Activated CD4-positive, alpha-beta T cell treated with anti-CD3 and anti-CD28 coated beads for 36 hours (primary cell): ENCODE measurements at regions of chr21 and their contacts with region 1.

Region 1: DNA sequence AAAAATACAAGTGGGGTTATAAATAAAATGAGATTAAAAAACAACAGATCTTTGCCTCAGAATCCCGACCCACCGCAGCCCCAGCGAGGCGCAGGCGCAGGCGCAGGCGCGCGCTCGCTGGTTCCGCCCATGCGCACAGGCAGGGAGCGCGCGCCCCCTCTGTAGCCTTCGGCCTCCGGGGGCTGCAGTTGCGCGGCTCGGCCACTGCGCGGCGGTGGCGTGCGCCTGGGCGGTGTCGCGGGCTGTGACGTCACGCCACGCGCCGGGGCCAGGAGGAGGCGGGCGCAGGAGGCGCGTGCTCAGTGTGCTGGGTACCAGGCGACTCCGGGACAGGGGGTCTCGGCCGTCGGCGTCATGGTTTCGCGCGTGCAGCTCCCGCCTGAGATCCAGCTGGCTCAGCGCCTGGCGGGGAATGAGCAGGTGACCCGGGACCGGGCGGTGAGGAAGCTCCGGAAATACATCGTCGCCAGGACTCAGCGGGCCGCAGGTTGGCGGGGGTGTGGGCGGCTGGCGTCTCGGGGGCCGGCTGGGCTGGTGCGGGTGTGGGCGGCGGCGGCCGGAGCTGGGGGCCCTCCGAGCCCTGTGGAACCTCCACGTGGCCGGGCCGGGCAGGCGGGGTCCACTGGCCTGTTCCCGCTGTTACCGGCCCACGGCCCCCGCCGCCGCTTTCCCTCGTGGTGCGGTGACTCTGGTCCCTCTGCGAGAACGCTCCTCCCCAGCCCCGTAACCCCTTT is at the start of gene RRP1:
- DNase-seq: peak; percentile 96
- ATAC-seq: peak; percentile 90
- H3K4me3 Mint-ChIP-seq: peak within 1 kb of the TSS; percentile 95
- H3K27ac Mint-ChIP-seq: peak within 1 kb of the TSS; percentile 92
- H3K4me1 Mint-ChIP-seq: peaks cover 21% of the 10 kb centered on the region
- H3K27me3 Mint-ChIP-seq: no peaks in the 10 kb centered on the region
- total RNA-seq, gene RRP1: 51.7 to 53.4 TPM

Region 2: GRCh38 chr21:42878993-42879787 is 910.3 kb before region 1 on chr21 and contains the start of gene WDR4:
- CTCF ChIA-PET with region 1: no interaction called
- POLR2A ChIA-PET with region 1: no interaction called
- intact Hi-C with region 1: loop called in 1 of 2 experiments (anchors 1 kb)
- DNase-seq: peak; percentile 99
- ATAC-seq: peak; percentile 93
- H3K4me3 Mint-ChIP-seq: peak within 1 kb of the TSS; percentile 92
- H3K27ac Mint-ChIP-seq: peak within 1 kb of the TSS; percentile 99
- H3K4me1 Mint-ChIP-seq: peaks cover 17% of the 10 kb centered on the region
- H3K27me3 Mint-ChIP-seq: no peaks in the 10 kb centered on the region
- total RNA-seq, gene WDR4: 34.0 to 46.5 TPM

Region 3: DNA sequence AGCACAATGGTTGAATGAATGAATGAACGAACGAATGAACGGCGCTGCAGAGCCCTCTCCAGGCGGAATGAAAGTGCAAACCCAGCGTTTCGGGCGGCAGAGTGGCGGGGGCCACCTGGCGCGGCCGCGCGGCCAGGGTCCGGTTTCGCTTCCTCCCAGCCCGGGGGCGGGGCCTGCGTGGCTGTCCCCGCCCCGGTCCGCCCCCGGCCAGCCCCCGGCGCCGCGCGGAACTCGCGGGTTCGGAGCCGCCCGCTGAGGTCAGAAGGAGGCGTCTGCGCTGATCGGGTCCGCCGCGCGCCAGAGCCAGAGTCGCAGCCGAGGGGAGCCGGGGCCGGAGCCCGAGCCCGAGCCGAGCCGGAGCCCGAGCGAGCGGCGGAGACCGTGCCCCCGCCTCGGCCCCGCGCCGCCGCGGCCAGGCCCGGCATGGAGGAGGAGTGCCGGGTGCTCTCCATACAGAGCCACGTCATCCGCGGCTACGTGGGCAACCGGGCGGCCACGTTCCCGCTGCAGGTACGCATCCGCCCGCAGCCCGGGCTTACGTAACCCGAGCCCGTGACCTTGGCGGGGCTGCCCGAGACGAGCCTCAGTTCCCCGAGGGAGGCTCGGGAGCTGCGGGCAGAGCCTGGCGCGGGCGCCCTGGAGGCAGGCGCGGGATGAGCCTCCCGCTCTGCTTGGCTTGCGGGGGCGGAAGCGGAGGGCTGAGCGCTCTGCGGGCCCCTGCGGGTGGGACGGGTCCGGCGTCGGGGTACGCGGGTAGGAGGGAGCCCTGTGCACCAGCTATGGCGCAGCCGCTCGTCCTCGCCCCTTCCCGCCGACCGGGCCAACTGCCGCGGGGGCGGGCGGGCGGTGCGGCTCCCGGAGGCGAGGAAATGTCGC is 70.3 kb before region 1 on chr21 and contains the start of gene PDXK:
- CTCF ChIA-PET with region 1: no interaction called
- POLR2A ChIA-PET with region 1: no interaction called
- intact Hi-C with region 1: loop called in 1 of 2 experiments (anchors 1 kb)
- DNase-seq: peak; percentile 86
- ATAC-seq: peak; percentile 82
- H3K4me3 Mint-ChIP-seq: peak within 1 kb of the TSS; percentile 82
- H3K27ac Mint-ChIP-seq: peak within 1 kb of the TSS; percentile 74
- H3K4me1 Mint-ChIP-seq: peaks cover 27% of the 10 kb centered on the region
- H3K27me3 Mint-ChIP-seq: no peaks in the 10 kb centered on the region
- total RNA-seq, gene PDXK: 96.9 to 117 TPM

Region 4: DNA sequence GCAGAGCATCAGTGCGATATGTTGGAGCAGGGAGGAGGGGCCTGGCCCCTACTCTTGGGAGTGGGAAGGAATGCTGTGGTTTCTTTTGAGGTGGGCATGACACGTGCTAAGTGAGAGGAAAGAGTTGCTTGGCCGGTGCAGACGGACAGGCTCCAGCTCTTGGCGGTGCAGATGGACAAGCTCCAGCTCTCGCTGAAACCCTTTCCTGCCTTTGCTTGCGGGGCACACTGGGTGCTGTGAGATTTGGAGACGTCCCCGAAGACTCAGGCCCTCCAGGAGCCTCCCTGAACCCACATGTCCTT is 54.6 kb before region 1 on chr21:
- CTCF ChIA-PET with region 1: no interaction called
- POLR2A ChIA-PET with region 1: no interaction called
- intact Hi-C with region 1: no loop called
- DNase-seq: no peak
- ATAC-seq: no peak
- H3K4me3 Mint-ChIP-seq: no peak overlapping the region
- H3K27ac Mint-ChIP-seq: no peak overlapping the region
- H3K4me1 Mint-ChIP-seq: peaks cover 44% of the 10 kb centered on the region
- H3K27me3 Mint-ChIP-seq: no peaks in the 10 kb centered on the region

Region 5: DNA sequence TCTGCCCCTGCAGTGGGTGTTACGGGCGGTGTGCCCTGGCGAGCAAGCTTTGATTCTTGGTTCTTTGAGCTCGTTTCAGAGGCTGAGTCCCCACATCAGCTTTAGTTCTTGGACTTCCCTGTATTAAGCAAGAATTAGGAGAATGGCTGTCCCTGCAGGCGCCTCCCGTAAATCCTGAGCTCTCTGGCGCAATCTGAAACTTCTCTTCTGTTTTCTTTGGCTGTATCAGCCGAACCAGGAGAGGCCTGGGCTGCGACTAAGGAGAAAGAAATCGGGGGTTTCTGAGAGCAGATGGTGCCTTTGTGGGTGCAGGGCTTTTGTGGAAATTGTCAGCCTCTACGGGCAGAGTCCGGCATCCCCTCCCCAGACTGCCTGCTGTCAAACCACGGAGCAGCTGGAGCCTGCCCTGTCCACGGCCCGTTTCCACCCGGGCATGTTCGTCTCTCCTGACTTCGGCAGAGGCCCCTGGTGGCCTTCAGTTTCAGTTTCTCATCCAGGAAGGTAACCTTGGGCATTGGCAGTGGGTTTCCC is 31.3 kb before region 1 on chr21:
- CTCF ChIA-PET with region 1: no interaction called
- POLR2A ChIA-PET with region 1: no interaction called
- intact Hi-C with region 1: no loop called
- DNase-seq: no peak
- ATAC-seq: no peak
- H3K4me3 Mint-ChIP-seq: no peak overlapping the region
- H3K27ac Mint-ChIP-seq: no peak overlapping the region
- H3K4me1 Mint-ChIP-seq: no peaks in the 10 kb centered on the region
- H3K27me3 Mint-ChIP-seq: no peaks in the 10 kb centered on the region

Region 6: DNA sequence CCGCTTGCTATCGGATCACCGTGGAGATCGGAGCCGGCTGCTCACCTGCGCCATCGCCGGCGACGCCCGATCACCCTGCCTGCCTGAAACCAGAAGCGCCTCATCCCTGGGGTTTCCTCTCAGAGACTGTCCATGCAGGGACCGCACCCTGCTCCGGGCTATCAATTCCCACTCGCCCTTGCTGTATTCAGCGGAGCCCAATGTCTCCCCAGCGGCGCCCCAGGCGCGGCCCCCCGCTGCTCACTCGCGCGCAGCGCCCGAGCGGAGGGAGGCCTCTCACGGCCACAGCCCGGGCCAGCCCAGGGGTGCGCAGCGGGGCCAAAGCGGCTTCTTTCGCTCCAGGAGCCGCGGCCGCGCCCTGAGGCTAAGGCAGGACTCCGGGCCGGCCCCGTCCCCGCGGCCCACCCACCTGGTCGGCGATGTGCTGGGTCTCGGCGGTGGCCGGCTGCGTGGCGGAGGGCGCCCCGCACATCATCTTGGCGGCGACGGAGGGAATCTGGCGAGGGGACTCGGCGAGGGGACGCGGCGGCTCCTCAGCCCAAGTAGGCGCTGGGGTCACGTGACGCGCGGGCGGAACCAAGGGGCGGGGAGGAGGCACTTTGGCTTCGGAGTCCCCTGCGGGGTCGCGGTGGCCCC is 13.5 kb before region 1 on chr21 and contains the start of gene CSTB:
- CTCF ChIA-PET with region 1: interaction called, 10 read pairs
- POLR2A ChIA-PET with region 1: no interaction called
- intact Hi-C with region 1: loop called in 1 of 2 experiments (anchors 1 kb)
- DNase-seq: peak; percentile 90
- ATAC-seq: peak; percentile 72
- H3K4me3 Mint-ChIP-seq: peak within 1 kb of the TSS; percentile 88
- H3K27ac Mint-ChIP-seq: peak within 1 kb of the TSS; percentile 74
- H3K4me1 Mint-ChIP-seq: peaks cover 40% of the 10 kb centered on the region
- H3K27me3 Mint-ChIP-seq: no peaks in the 10 kb centered on the region
- total RNA-seq, gene CSTB: 29.9 to 30.9 TPM

Region 7: GRCh38 chr21:43916691-43917514 is 127.5 kb after region 1 on chr21:
- CTCF ChIA-PET with region 1: interaction called, 4 read pairs
- POLR2A ChIA-PET with region 1: no interaction called
- intact Hi-C with region 1: loop called in 1 of 2 experiments (anchors 1 kb)
- DNase-seq: peak; percentile 84
- ATAC-seq: peak; percentile 83
- H3K4me3 Mint-ChIP-seq: peak overlapping the region; percentile 81
- H3K27ac Mint-ChIP-seq: peak overlapping the region; percentile 78
- H3K4me1 Mint-ChIP-seq: peaks cover 61% of the 10 kb centered on the region
- H3K27me3 Mint-ChIP-seq: no peaks in the 10 kb centered on the region

Region 8: DNA sequence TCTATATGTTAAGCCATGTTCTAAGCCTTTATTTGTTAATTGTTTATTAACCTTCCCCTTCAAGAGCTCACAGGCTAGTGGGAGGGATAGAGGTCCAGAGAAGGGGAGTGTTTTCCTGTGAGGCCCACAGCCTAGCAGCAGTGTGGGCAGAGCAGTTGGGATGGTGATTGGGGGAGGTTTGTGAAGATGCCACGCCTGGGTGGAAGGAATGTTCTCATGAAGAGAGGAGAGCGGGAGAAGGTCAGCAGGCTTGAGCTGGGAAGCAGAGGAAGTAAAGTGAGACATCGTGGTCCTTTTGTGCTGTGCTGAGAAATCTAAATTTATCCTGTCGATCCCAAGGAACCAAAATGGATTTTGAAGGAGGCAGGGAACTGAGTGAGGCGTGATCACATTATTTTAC is 265.3 kb after region 1 on chr21:
- CTCF ChIA-PET with region 1: no interaction called
- POLR2A ChIA-PET with region 1: no interaction called
- intact Hi-C with region 1: loop called in 1 of 2 experiments (anchors 5 kb)
- DNase-seq: no peak
- ATAC-seq: no peak
- H3K4me3 Mint-ChIP-seq: no peak overlapping the region
- H3K27ac Mint-ChIP-seq: peak overlapping the region; percentile 80
- H3K4me1 Mint-ChIP-seq: peaks cover 28% of the 10 kb centered on the region
- H3K27me3 Mint-ChIP-seq: no peaks in the 10 kb centered on the region

Region 9: GRCh38 chr21:44338971-44339910 is 549.8 kb after region 1 on chr21 and contains the start of gene CFAP410:
- CTCF ChIA-PET with region 1: no interaction called
- POLR2A ChIA-PET with region 1: no interaction called
- intact Hi-C with region 1: loop called in 1 of 2 experiments (anchors 1 kb)
- DNase-seq: peak; percentile 97
- ATAC-seq: peak; percentile 97
- H3K4me3 Mint-ChIP-seq: peak within 1 kb of the TSS; percentile 96
- H3K27ac Mint-ChIP-seq: peak within 1 kb of the TSS; percentile 98
- H3K4me1 Mint-ChIP-seq: peaks cover 18% of the 10 kb centered on the region
- H3K27me3 Mint-ChIP-seq: no peaks in the 10 kb centered on the region
- total RNA-seq, gene CFAP410: 7.3 to 11.4 TPM

Region 10: DNA sequence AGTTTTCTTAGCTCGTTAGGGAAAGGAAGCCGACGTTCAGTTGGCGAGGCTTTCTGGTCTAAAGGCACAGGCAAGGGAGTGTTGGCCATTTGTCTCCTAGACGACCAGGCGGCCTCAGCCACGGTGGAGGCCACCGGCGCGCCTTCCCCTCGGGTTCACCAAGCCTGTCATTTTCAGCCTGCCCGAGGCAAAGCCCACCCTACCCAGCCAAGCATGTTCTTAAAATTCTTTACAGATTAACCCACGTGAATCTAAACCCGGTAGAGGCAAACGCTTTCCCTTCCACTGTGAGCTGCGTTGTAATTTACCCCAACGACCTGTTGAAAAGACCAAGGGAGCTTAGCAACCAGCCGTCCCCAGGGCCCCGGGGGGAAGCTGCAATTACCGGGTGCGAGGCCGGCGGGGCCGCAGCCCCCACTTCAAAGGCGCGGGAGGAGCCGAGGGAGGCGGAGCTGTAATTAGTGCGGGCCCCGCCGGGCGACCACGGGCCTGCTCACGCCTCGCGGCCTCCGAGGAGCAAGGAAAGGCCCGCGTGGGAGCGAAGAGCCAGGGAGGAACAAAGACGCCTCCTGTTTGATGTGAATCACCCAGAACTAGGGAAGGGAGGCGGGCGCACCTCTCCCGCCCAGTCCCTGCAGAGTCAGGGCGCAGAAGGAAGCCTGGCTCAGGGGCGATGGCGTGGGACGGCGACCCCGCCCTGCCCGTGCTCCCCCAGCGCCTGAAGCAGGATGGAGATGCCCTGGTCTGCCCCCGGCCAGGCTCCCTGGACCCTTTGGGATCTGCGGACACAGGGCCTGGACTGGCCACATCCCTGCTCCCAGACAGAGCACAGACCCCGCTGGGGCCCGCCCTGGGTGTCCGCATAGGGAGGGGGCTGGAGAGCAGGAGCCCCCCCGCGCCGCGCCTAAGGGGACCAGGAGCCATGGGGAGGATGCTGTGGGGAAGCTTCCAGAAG is 934.0 kb after region 1 on chr21:
- CTCF ChIA-PET with region 1: no interaction called
- POLR2A ChIA-PET with region 1: no interaction called
- intact Hi-C with region 1: no loop called
- DNase-seq: peak; percentile 27
- ATAC-seq: peak; percentile 33
- H3K4me3 Mint-ChIP-seq: no peak overlapping the region
- H3K27ac Mint-ChIP-seq: no peak overlapping the region
- H3K4me1 Mint-ChIP-seq: peaks cover 8% of the 10 kb centered on the region
- H3K27me3 Mint-ChIP-seq: peaks cover 39% of the 10 kb centered on the region